HepG2 (cell line): ENCODE measurements at regions of chr6 and their contacts with region 1.

Region 1: DNA sequence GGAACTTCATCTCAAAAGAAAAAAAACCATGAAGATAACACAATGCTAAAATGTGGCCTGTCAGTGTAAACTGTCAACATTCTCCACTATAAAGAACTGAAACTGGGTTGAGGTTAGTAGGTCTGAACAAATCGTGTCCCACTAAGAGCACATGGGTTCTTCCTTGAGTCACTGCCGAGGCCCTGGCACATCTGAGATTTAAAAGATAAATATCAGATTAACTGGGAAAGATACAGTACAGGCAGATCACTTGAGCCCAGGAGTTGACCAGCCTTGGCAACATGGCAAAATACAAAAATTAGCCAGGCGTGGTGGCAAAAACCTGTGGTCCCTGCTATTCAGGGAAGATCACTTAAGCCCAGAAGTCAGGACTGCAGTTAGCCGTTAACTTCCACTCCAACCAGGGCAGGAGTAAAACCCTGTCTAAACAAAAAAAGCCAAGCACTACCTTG is 5.6 kb downstream of the EEF1A1 start:
- DNase-seq: no peak
- ATAC-seq: no peak
- H3K4me3 ChIP-seq: no peak overlapping the region
- H3K27ac ChIP-seq: peak overlapping the region; percentile 15
- H3K4me1 ChIP-seq: peaks cover 26% of the 10 kb centered on the region
- H3K27me3 ChIP-seq: no peaks in the 10 kb centered on the region; a peak in 1 of 5 replicates
- CTCF ChIP-seq: no peak
- EP300 ChIP-seq: no peak
- POLR2A ChIP-seq: no peak; a peak in 2 of 4 replicates
- RAD21 ChIP-seq: no peak

Region 2: DNA sequence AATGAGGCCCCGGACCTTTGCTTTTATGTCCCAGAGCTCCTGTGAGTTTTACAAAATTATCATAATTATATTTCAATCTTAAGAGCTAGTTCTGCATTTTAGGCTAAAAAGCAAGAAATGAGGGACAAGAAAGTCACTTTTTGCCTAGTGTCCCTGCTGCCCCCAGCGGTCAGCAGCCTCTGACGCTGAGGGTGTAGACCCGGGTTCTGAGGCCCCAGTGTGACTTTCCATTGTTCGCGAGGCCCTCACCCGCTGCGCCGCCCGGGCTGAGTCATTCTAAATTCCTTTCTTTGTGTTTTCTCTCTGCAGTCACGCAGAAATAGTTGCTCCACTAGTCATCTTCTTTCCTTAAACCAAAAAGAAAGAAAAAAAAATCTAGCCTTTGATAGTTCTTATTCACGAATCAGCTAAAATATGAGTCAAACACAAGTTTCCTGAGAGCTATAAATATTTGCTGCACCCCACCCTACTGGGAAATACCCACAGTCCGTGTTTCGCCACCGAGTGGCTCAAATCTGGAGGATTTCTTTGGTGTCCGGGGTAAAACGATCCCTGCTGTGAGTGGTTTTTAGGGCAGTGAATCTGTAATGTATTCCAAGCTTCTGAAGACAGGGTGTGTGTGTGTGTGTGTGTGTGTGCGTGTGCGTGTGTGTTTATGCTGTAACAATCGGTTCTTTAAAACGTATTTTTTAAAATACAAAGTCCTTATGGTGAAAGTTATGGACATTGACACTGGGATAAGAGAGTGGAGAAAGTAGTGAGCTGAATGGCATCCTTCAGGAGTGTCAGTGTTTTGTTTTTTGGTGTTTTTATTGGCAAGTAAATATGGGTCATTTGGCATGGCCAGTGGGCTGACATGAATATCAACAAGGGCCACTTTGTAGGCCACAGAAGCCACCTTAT is 65.3 kb after region 1 on chr6:
- CTCF ChIA-PET with region 1: no interaction called
- POLR2A ChIA-PET with region 1: interaction called, 113 read pairs
- in situ Hi-C with region 1: loop called (anchors 10 kb)
- intact Hi-C with region 1: no loop called
- DNase-seq: peak; percentile 93
- ATAC-seq: peak; percentile 96
- H3K4me3 ChIP-seq: peak overlapping the region; percentile 45 to 67 (median 63)
- H3K27ac ChIP-seq: peak overlapping the region; percentile 99
- H3K4me1 ChIP-seq: peaks cover 50% of the 10 kb centered on the region
- H3K27me3 ChIP-seq: no peaks in the 10 kb centered on the region; a peak in 1 of 5 replicates
- CTCF ChIP-seq: peak; percentile 70
- EP300 ChIP-seq: peak in 1 of 2 experiments; percentile 83; a peak in 1 of 4 replicates
- POLR2A ChIP-seq: 0 out of 4 replicates have a peak, but pooled peaks of 1 of the 2 experiments have one; percentile 30
- RAD21 ChIP-seq: peak; percentile 55; the same call in 1 of the 2 replicates

Region 3: DNA sequence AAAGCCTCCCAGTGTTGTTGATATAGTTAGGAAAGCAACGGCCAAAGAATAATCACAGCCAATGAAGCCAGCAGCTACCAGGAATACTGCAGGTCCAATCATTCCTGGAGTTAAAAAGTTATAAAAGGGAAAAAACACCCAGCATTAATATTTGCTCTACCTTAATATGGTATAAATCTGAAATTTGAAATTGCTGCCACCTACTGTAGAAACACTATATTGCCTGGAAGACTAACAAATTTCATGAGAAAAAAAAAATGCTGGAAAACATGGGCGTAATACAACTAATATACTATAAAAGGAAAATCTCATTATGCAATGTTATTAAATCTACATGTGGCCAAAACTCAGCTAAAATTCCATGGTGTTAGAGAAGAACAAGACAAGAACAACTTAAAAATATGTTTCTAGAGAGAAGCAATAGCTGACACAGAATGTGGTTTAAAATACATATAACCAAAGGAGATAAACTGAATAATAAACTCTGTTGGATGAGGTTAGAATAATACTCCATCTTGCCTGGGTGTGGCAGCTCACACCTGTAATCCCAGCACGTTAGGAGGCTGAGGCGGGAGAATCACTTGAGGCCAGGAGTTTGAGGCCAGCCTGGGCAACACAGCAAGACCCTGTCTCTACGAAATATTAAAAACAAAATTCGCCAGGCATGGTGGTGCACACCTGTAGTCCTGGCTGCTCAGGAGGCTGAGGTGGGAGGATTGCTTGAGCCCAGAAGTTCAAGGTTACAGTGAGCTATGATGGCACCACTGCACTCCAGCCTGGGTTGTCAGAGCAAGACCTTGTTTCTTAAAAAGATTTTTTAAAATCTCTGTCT is 95.4 kb after region 1 on chr6:
- CTCF ChIA-PET with region 1: interaction called, 13 read pairs
- POLR2A ChIA-PET with region 1: interaction called, 16 read pairs
- in situ Hi-C with region 1: loop called (anchors 5 kb)
- intact Hi-C with region 1: loop called (anchors 1 kb)
- DNase-seq: peak; percentile 52
- ATAC-seq: peak; percentile 51; the same call in 2 of the 3 replicates
- H3K4me3 ChIP-seq: no peak overlapping the region
- H3K27ac ChIP-seq: no peak overlapping the region
- H3K4me1 ChIP-seq: peaks cover 17% of the 10 kb centered on the region
- H3K27me3 ChIP-seq: no peaks in the 10 kb centered on the region
- CTCF ChIP-seq: peak; percentile 57
- EP300 ChIP-seq: no peak
- POLR2A ChIP-seq: no peak
- RAD21 ChIP-seq: peak; percentile 65